GM18951 (cell line): ENCODE measurements at regions of chr7 and their contacts with region 1.

Region 1: GRCh38 chr7:106009403-106010226 is 46.6 kb downstream of the CDHR3 start:
- POLR2A ChIP-seq: no peak

Region 2: DNA sequence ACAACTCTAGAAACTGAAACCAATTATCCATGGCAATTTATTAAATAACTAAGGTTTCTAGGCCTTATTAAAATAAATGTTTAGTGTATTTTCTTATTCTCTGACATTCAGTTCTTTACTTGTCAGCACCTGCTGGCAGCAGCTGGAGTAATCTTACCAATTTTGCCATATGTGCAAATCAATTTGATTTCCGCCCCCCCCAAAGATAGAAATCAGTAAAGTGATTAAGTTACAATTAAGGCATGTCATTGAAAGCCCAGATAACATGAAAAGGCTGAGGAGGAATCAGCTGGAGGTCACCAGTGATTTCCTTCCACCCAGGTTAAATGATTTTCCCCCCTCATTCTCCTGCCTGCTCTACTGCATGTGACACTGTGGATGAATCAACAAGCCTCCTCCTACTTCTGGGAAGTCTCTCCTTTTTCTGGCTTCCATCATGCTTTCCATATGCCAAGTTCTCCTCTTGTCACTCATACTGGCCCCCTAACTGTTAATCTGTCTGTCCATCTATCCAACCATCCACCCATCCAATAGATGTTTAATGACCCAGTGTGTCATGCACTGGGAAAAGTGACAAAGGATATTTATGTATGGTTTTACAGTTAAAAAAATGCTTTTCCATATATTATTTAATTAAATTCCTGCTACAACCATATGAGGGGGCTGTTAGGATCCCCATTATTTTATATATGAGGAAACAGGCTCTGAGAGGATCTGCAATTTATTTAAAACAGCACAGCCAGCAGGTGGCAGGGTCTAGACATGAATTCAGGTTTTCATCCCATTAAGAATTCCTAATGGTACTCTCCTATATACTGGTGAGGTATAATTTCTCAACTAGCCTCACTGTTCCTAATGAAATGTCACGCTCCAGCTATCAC is 249.7 kb before region 1 on chr7:
- in situ Hi-C with region 1: loop called (anchors 25 kb)
- POLR2A ChIP-seq: no peak

Region 3: DNA sequence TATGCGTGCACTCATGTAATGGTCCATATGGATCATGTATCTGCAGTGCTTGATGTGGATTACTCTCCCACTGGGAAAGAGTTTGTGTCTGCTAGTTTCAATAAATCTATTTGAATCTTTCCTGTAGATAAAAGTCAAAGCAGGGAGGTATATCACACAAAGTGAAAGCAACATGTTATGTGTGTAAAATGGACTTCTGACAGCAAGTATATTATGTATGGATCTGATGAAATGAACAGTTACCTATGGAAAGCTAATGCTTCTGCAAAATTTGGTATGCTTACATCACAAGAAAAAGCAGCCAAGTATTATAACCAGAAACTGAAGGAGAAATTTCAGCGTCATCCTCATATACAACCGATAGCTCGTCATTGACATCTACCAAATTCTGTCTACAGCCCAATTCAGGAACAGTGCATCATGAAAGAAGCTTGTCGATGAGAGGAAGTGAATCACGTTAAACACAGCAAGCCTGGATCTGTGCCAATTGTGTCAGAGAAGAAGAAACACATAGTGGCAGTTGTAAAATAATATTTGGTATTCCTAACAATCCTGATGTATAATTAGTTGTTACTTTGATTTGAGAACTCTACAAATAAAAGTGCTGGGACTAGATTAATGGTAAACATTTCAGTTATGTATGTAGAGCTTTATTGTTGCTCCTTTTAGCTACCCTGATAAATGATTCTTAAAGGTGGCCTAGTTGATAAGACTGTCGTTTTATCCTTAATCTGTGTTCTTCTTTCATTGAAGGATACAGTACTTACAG is 116.7 kb after region 1 on chr7:
- in situ Hi-C with region 1: no loop called
- POLR2A ChIP-seq: no peak

Region 4: DNA sequence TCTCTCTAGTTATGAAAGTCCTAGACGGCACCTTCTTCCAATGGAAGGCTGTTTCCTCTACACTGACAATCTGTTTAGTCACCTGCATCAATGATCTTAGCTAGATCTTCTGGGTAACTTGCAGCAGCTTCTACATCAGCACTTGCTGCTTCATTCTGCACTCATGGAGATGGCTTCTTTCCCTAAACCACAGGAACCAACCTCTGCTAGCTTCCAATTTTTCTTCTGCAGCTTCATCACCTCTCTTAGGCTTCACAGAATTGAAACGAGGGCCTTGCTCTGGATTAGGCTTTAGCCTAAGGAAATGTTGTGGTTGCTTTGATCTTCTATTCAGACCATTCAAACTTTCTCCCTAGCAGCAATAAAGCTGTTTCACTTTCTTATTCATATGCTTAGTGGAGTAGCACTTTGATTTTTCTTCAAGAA is 250.5 kb after region 1 on chr7:
- in situ Hi-C with region 1: no loop called
- POLR2A ChIP-seq: no peak

Region 5: GRCh38 chr7:106421181-106421762 is 411.7 kb after region 1 on chr7:
- in situ Hi-C with region 1: no loop called
- POLR2A ChIP-seq: no peak